GM12878 (cell line): ENCODE measurements at regions of chr1 and their contacts with region 1.

Region 1: GRCh38 chr1:173409613-173410012 is 67.5 kb upstream of the PRDX6 start:
- DNase-seq: no peak
- ATAC-seq: peak; percentile 17
- H3K4me3 ChIP-seq: peak overlapping the region; percentile 35; the same call in 1 of the 2 replicates
- H3K27ac ChIP-seq: peak overlapping the region; percentile 98
- H3K4me1 ChIP-seq: peaks cover 65% of the 10 kb centered on the region
- H3K27me3 ChIP-seq: no peaks in the 10 kb centered on the region
- CTCF ChIP-seq: no peak
- EP300 ChIP-seq: peak in 1 of 2 experiments; percentile 29; a peak in 1 of 4 replicates
- POLR2A ChIP-seq: no peak
- RAD21 ChIP-seq: no peak

Region 2: GRCh38 chr1:172818841-172819527 is 590.6 kb before region 1 on chr1:
- CTCF ChIA-PET with region 1: no interaction called
- POLR2A ChIA-PET with region 1: interaction called, 7 read pairs
- RAD21 ChIA-PET with region 1: interaction called, 3 read pairs
- SMC1A ChIA-PET with region 1: interaction called, 6 read pairs
- in situ Hi-C with region 1: no loop called
- intact Hi-C with region 1: loop called (anchors 2 kb)
- DNase-seq: peak; percentile 99
- ATAC-seq: peak; percentile 95
- H3K4me3 ChIP-seq: no peak overlapping the region; the same call in 1 of the 2 replicates
- H3K27ac ChIP-seq: peak overlapping the region; percentile 73
- H3K4me1 ChIP-seq: peaks cover 32% of the 10 kb centered on the region
- H3K27me3 ChIP-seq: no peaks in the 10 kb centered on the region
- CTCF ChIP-seq: no peak
- EP300 ChIP-seq: peak; percentile 91 to 92
- POLR2A ChIP-seq: no peak
- RAD21 ChIP-seq: peak; percentile 23; the same call in 1 of the 2 replicates

Region 3: DNA sequence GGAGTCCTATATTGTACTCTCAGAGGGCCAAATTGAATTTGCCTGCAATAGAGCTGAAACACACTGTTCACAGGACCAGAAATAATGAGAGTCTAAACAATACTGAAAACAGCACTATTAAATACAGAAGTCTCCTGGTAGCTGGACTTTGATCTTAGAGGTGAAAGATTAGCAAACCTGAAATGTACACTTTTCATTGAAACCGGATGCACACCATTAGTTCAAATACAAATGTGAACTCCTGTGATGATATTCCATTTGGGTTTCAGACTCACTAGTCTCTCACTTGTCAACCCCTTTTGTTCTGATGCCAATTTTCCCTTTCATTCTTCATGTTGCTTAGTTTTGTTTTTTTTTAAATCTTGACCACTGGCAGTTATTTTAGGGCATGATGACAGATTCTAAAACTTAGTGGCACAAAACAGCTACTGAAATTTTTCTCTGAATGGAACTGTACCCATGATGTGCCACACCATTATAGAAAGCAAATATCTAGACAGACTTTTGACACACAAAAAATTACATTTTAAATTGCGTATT is 196.6 kb before region 1 on chr1:
- CTCF ChIA-PET with region 1: interaction called, 5 read pairs
- POLR2A ChIA-PET with region 1: no interaction called
- RAD21 ChIA-PET with region 1: interaction called, 105 read pairs
- SMC1A ChIA-PET with region 1: interaction called, 348 read pairs
- in situ Hi-C with region 1: no loop called
- intact Hi-C with region 1: loop called (anchors 2 kb)
- DNase-seq: peak; percentile 90
- ATAC-seq: peak; percentile 91
- H3K4me3 ChIP-seq: no peak overlapping the region
- H3K27ac ChIP-seq: no peak overlapping the region
- H3K4me1 ChIP-seq: peaks cover 5% of the 10 kb centered on the region
- H3K27me3 ChIP-seq: no peaks in the 10 kb centered on the region
- CTCF ChIP-seq: no peak
- EP300 ChIP-seq: peak; percentile 58 to 92; a peak in 3 of 4 replicates
- POLR2A ChIP-seq: no peak
- RAD21 ChIP-seq: 0 out of 2 replicates have a peak, but pooled peaks have one; percentile 13

Region 4: GRCh38 chr1:173224280-173224892 is 185.2 kb before region 1 on chr1:
- CTCF ChIA-PET with region 1: interaction called, 6 read pairs
- POLR2A ChIA-PET with region 1: interaction called, 5 read pairs
- RAD21 ChIA-PET with region 1: interaction called, 4 read pairs
- SMC1A ChIA-PET with region 1: interaction called, 9 read pairs
- in situ Hi-C with region 1: loop called (anchors 5 kb)
- intact Hi-C with region 1: no loop called
- DNase-seq: no peak
- ATAC-seq: peak; percentile 13
- H3K4me3 ChIP-seq: no peak overlapping the region
- H3K27ac ChIP-seq: no peak overlapping the region
- H3K4me1 ChIP-seq: peaks cover 38% of the 10 kb centered on the region
- H3K27me3 ChIP-seq: no peaks in the 10 kb centered on the region
- CTCF ChIP-seq: no peak
- EP300 ChIP-seq: no peak
- POLR2A ChIP-seq: no peak
- RAD21 ChIP-seq: no peak

Region 5: DNA sequence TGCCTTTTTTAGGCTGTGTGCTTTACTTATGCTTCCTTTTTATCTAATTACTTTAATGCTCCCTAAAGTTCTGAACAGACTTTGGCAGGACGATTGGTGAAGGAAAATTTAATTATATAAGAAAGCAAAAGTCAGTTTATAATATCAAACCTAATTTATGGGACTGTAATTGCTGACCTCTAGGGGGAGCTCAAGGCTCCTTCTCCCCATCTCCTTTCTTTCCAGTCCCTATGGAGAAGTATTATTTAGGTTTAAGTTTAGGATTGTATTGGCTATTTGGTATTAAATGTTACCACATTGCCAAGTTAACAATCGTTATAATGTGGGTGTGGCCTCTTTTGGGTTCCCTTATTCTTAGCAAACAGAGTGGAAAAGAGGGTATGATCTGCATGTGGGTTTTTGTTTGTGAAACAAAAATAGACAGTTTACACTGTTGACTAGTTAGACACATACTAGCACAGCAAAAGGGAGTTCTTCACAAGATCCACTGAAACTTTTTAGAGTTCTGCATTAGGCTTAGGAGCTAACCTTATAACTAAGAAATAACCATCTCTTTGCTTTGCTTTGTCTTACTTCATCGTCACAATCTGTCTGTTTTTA is 154.3 kb before region 1 on chr1:
- CTCF ChIA-PET with region 1: interaction called, 9 read pairs
- POLR2A ChIA-PET with region 1: interaction called, 3 read pairs
- RAD21 ChIA-PET with region 1: interaction called, 5 read pairs
- SMC1A ChIA-PET with region 1: interaction called, 30 read pairs
- in situ Hi-C with region 1: loop called (anchors 5 kb)
- intact Hi-C with region 1: loop called (anchors 2 kb)
- DNase-seq: peak; percentile 16
- ATAC-seq: peak; percentile 67
- H3K4me3 ChIP-seq: no peak overlapping the region
- H3K27ac ChIP-seq: no peak overlapping the region
- H3K4me1 ChIP-seq: peaks cover 4% of the 10 kb centered on the region; the same call in 1 of the 2 replicates
- H3K27me3 ChIP-seq: no peaks in the 10 kb centered on the region
- CTCF ChIP-seq: peak; percentile 67 to 80 (median 70)
- EP300 ChIP-seq: no peak
- POLR2A ChIP-seq: no peak
- RAD21 ChIP-seq: peak; percentile 68

Region 6: GRCh38 chr1:173314656-173315055 is 95.0 kb before region 1 on chr1:
- CTCF ChIA-PET with region 1: no interaction called
- POLR2A ChIA-PET with region 1: no interaction called
- RAD21 ChIA-PET with region 1: no interaction called
- SMC1A ChIA-PET with region 1: no interaction called
- in situ Hi-C with region 1: no loop called
- intact Hi-C with region 1: no loop called
- DNase-seq: no peak
- ATAC-seq: no peak
- H3K4me3 ChIP-seq: no peak overlapping the region
- H3K27ac ChIP-seq: no peak overlapping the region
- H3K4me1 ChIP-seq: no peaks in the 10 kb centered on the region
- H3K27me3 ChIP-seq: no peaks in the 10 kb centered on the region
- CTCF ChIP-seq: no peak
- EP300 ChIP-seq: no peak
- POLR2A ChIP-seq: no peak
- RAD21 ChIP-seq: no peak

Region 7: DNA sequence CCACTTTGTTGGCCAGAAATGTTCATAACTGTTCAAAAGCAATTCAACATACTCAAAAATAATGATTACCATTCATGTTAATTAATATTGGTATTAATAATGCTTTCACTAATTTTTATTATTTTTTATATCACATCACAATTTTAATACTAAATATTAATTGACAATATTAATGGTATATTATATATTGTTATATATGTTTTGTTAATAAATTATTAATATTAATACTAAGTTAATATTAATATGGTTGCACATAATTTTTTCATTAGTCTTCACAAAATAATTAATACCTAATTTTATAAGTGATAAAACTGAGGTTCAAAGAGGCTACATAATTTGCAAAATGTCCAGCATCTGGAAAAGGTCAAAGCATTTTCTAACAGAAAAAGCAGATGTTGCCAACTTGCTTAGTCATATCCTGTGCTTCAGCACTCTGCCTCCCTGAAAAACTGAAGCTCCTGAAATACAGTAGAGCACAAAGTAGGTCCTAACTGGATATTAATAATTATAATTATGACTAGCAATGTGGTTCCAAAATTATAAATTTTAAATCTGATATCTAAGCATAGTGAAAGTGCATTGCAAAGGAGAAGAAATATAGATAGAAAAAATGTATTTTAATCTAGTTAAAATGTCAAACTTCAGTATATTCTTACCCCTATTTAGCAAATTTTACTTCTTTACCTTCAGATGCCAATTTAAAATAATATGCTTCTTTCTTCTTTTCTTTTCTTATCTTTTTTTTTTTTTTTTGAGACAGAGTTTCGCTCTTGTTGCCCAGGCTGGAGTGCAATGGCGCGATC is 79.3 kb before region 1 on chr1:
- CTCF ChIA-PET with region 1: interaction called, 5 read pairs
- POLR2A ChIA-PET with region 1: interaction called, 4 read pairs
- RAD21 ChIA-PET with region 1: interaction called, 8 read pairs
- SMC1A ChIA-PET with region 1: interaction called, 9 read pairs
- in situ Hi-C with region 1: loop called (anchors 5 kb)
- intact Hi-C with region 1: loop called (anchors 2 kb)
- DNase-seq: no peak
- ATAC-seq: peak; percentile 28
- H3K4me3 ChIP-seq: no peak overlapping the region
- H3K27ac ChIP-seq: peak overlapping the region; percentile 83
- H3K4me1 ChIP-seq: peaks cover 36% of the 10 kb centered on the region
- H3K27me3 ChIP-seq: no peaks in the 10 kb centered on the region
- CTCF ChIP-seq: no peak
- EP300 ChIP-seq: no peak
- POLR2A ChIP-seq: no peak
- RAD21 ChIP-seq: no peak

Region 8: DNA sequence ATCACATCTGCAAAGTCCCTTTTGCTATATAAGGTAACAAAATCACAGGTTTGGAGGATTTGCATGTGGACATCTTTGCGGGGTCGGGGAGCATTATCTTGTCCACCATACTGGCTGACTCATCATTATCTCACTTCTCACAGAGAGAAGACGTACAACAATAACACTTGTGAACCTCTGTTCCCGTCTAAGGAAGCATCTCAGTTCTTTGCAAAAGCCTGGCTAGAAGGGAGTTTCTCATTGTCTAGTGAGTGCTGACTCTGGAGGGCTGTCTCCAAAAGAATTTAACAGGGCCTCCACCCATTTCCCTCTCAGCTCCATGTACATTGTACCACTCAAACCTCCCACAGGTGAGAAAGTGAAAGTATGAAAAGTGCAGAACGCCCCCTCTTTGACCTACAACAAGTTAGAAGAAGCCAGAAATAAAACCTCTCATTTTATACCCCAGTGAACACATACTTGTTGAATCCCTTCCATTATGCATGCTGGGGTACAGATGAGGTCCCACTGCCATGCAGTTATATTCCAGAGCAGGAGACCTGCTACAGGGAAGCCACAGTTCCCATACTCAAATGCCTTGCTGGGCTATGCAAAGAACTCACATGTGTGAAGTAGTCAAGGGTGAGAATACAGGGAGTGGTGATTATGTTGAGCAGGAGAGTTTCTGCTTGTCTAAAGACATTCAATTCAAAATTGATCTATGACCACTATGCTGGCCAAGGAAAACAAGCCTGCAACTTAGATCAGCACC is 54.2 kb before region 1 on chr1:
- CTCF ChIA-PET with region 1: interaction called, 4 read pairs
- POLR2A ChIA-PET with region 1: interaction called, 4 read pairs
- RAD21 ChIA-PET with region 1: interaction called, 6 read pairs
- SMC1A ChIA-PET with region 1: interaction called, 10 read pairs
- in situ Hi-C with region 1: no loop called
- intact Hi-C with region 1: loop called (anchors 2 kb)
- DNase-seq: peak; percentile 62
- ATAC-seq: peak; percentile 83
- H3K4me3 ChIP-seq: peak overlapping the region; percentile 53
- H3K27ac ChIP-seq: peak overlapping the region; percentile 75
- H3K4me1 ChIP-seq: peaks cover 27% of the 10 kb centered on the region
- H3K27me3 ChIP-seq: no peaks in the 10 kb centered on the region
- CTCF ChIP-seq: no peak
- EP300 ChIP-seq: peak in 1 of 2 experiments; percentile 64; a peak in 1 of 4 replicates
- POLR2A ChIP-seq: no peak
- RAD21 ChIP-seq: 0 out of 2 replicates have a peak, but pooled peaks have one; percentile 1

Region 9: DNA sequence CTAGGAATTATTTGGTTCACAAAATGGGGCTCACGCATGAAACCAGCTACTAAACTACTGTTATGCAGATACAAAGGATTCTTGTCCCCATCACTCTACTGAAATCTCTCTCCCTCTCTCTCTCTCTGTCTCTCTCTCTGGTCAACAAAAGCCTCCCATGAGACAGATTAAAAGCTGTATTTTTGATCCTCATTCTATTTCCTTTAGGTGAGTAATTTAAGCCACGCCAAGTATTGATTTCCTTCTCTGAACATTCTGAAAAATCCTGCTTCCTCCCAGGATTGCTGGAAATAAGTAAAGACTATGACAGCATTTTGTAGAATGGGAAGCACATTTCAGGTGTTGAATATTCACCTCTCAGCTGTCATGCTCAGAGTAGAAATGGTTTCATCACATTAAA is 111.2 kb after region 1 on chr1:
- CTCF ChIA-PET with region 1: no interaction called
- POLR2A ChIA-PET with region 1: no interaction called
- RAD21 ChIA-PET with region 1: no interaction called
- SMC1A ChIA-PET with region 1: no interaction called
- in situ Hi-C with region 1: no loop called
- intact Hi-C with region 1: no loop called
- DNase-seq: no peak
- ATAC-seq: no peak
- H3K4me3 ChIP-seq: no peak overlapping the region
- H3K27ac ChIP-seq: no peak overlapping the region
- H3K4me1 ChIP-seq: no peaks in the 10 kb centered on the region
- H3K27me3 ChIP-seq: no peaks in the 10 kb centered on the region
- CTCF ChIP-seq: no peak
- EP300 ChIP-seq: no peak
- POLR2A ChIP-seq: no peak
- RAD21 ChIP-seq: no peak

Region 10: GRCh38 chr1:173702736-173703135 is 293.1 kb after region 1 on chr1:
- CTCF ChIA-PET with region 1: no interaction called
- POLR2A ChIA-PET with region 1: no interaction called
- RAD21 ChIA-PET with region 1: no interaction called
- SMC1A ChIA-PET with region 1: no interaction called
- in situ Hi-C with region 1: no loop called
- intact Hi-C with region 1: no loop called
- DNase-seq: no peak
- ATAC-seq: no peak
- H3K4me3 ChIP-seq: no peak overlapping the region
- H3K27ac ChIP-seq: no peak overlapping the region
- H3K4me1 ChIP-seq: no peaks in the 10 kb centered on the region
- H3K27me3 ChIP-seq: no peaks in the 10 kb centered on the region
- CTCF ChIP-seq: no peak
- EP300 ChIP-seq: no peak
- POLR2A ChIP-seq: no peak
- RAD21 ChIP-seq: no peak

Region 11: DNA sequence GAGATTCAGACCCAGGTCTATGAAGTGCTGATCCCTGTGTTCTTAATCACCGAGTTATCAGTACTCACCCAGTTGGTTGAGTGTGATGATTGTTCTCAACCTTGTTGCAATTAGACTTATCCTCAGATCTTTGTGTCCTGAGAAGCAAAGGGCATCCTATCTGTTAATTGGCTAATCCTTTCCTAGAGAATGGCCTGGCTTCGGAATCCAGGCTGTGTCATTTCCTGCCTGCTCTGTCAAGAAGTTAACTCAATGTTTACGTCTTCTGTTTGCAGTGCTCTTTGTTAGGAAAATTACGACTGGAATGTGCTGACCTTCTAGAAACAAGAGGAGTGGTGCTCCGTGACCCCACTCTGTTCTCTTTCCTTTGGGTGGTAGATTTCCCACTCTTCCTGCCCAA is 443.5 kb after region 1 on chr1:
- CTCF ChIA-PET with region 1: no interaction called
- POLR2A ChIA-PET with region 1: no interaction called
- RAD21 ChIA-PET with region 1: no interaction called
- SMC1A ChIA-PET with region 1: no interaction called
- in situ Hi-C with region 1: no loop called
- intact Hi-C with region 1: no loop called
- DNase-seq: no peak
- ATAC-seq: no peak
- H3K4me3 ChIP-seq: no peak overlapping the region
- H3K27ac ChIP-seq: no peak overlapping the region
- H3K4me1 ChIP-seq: no peaks in the 10 kb centered on the region
- H3K27me3 ChIP-seq: no peaks in the 10 kb centered on the region
- CTCF ChIP-seq: no peak
- EP300 ChIP-seq: no peak
- POLR2A ChIP-seq: no peak
- RAD21 ChIP-seq: no peak